ENCODE measurements at regions of chr18 and their contacts with region 1.

Region 1: DNA sequence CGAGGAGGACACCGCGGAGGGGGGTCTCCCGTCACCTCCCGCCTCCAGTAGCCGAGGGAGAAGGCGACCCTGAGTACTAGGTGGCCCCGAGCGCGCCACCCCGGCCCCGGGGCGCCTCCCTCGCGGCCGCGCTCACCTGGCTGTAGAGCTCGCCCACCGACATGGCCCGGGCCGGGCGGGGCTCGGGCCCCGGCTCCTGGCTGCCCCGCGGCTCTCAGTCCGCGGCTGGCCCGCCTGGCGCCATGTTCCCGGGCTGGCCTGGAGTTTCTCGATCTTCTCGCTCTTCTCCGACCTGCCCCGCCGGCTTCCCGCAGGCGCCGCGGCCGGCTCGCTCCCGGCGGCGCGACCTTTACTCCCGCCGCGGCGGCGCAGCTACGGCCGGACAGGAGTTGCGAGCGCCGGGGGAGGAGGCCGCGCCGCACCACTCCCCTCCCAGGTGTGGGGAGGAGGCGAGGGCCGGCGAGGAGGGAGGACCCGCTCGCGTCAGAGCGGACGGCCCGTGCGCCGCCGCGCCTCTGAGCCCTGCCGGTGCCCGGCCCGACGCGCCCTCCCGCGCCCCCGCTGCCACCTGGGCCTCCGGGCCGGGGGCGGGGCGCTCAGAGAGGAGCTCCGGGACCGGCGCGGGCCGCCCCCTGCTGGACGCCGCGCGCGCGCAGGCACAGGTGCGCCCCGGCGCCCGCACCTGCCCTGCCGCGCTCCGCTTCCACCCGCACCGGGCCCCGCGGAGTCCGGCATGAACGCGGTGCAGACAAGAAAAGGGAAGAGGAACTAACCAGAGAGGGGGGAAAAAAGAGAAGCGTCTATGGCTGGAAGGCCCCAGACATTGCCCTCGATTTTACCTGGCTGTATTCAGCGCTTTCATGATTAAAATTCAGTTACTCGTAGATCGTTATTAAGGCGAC is at the start of gene MYO5B:
- DNase-seq: peak; percentile 63
- ATAC-seq: peak; percentile 90
- H3K4me3 ChIP-seq: peak within 1 kb of the TSS; percentile 73 to 90 (median 83)
- H3K27ac ChIP-seq: peak within 1 kb of the TSS; percentile 65
- H3K4me1 ChIP-seq: peaks cover 42% of the 10 kb centered on the region
- H3K27me3 ChIP-seq: peaks cover 0 to 15% of the 10 kb centered on the region in 2 experiments; a peak in 4 of 5 replicates
- CTCF ChIP-seq: peak; percentile 50; the same call in 1 of the 2 replicates
- EP300 ChIP-seq: no peak
- POLR2A ChIP-seq: peak; percentile 41; a peak in 1 of 4 replicates
- RAD21 ChIP-seq: peak; percentile 96
- total RNA-seq, gene MYO5B: 24.0 and 34.9 TPM in 2 replicates

Region 2: DNA sequence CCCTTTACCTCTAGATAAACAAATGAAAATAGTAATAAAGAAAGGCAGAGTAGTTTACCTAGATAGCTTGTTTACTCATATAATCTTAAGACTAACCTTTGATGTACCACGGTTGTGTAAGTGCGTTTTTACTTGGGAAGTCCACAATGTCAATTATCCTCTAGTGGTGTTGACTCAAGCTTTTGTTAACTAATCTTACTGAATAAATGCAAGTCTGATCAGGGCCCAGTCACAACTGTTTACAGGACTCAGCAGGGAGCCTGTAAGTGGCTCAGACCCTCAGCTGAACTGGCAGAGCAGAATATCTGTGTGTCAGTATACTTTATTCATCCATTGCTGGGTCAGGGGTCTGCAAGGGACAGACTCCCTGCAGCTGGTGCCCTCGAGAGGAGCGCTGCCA is 283.5 kb before region 1 on chr18:
- CTCF ChIA-PET with region 1: no interaction called
- POLR2A ChIA-PET with region 1: no interaction called
- in situ Hi-C with region 1: loop called (anchors 10 kb)
- intact Hi-C with region 1: no loop called
- DNase-seq: peak; percentile 69
- ATAC-seq: peak; percentile 61
- H3K4me3 ChIP-seq: no peak overlapping the region
- H3K27ac ChIP-seq: peak overlapping the region; percentile 25
- H3K4me1 ChIP-seq: peaks cover 32% of the 10 kb centered on the region
- H3K27me3 ChIP-seq: no peaks in the 10 kb centered on the region
- CTCF ChIP-seq: no peak
- EP300 ChIP-seq: 0 out of 4 replicates have a peak, but pooled peaks of 1 of the 2 experiments have one; percentile 29
- POLR2A ChIP-seq: no peak
- RAD21 ChIP-seq: no peak

Region 3: DNA sequence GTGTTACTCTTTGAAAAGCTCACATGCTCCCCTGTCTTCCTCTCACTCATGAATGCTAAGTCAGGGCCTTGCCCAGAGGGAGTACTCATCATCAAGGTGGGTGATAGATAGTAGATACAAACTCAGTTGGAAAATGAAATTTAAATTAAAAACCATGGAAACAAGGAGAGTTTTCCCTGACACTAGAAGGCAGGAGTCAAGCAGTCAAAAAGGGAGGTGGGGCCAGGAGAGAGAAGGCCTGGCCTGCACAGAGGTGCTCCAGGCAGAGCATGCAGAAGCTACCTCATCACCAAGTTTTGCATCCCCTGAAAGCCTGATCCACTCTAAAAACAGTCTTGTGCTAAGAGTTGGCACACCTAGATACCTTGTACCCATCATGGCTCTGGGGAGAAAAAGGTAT is 143.6 kb before region 1 on chr18:
- CTCF ChIA-PET with region 1: interaction called, 15 read pairs
- POLR2A ChIA-PET with region 1: no interaction called
- in situ Hi-C with region 1: loop called (anchors 5 kb)
- intact Hi-C with region 1: no loop called
- DNase-seq: peak; percentile 25
- ATAC-seq: peak; percentile 88
- H3K4me3 ChIP-seq: no peak overlapping the region
- H3K27ac ChIP-seq: no peak overlapping the region
- H3K4me1 ChIP-seq: no peaks in the 10 kb centered on the region
- H3K27me3 ChIP-seq: no peaks in the 10 kb centered on the region
- CTCF ChIP-seq: peak; percentile 73
- EP300 ChIP-seq: no peak
- POLR2A ChIP-seq: no peak
- RAD21 ChIP-seq: peak; percentile 62

Region 4: DNA sequence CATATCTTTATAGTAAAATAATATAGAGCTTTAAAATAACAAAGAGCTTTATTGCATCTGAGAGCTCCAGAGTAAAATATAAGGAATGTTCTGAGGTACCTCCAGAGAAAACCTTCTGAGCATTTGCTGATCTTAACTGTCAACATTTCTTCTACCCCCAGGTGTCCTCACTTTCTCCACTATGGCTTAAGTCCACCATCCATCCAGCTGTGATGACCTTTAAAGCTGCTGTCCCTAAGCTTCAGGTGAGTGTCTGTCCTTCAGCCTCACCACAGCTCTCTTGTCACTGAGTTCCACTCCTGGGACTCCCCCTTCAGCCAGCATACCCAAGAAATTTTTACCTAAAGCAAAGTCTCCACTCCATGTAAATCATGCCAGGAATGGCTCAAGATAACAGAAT is 137.9 kb before region 1 on chr18:
- CTCF ChIA-PET with region 1: interaction called, 10 read pairs
- POLR2A ChIA-PET with region 1: no interaction called
- in situ Hi-C with region 1: loop called (anchors 5 kb)
- intact Hi-C with region 1: loop called (anchors 1 kb)
- DNase-seq: peak; percentile 14
- ATAC-seq: peak; percentile 72
- H3K4me3 ChIP-seq: no peak overlapping the region
- H3K27ac ChIP-seq: no peak overlapping the region
- H3K4me1 ChIP-seq: peaks cover 19% of the 10 kb centered on the region
- H3K27me3 ChIP-seq: no peaks in the 10 kb centered on the region
- CTCF ChIP-seq: peak; percentile 50
- EP300 ChIP-seq: no peak
- POLR2A ChIP-seq: no peak
- RAD21 ChIP-seq: no peak

Region 5: DNA sequence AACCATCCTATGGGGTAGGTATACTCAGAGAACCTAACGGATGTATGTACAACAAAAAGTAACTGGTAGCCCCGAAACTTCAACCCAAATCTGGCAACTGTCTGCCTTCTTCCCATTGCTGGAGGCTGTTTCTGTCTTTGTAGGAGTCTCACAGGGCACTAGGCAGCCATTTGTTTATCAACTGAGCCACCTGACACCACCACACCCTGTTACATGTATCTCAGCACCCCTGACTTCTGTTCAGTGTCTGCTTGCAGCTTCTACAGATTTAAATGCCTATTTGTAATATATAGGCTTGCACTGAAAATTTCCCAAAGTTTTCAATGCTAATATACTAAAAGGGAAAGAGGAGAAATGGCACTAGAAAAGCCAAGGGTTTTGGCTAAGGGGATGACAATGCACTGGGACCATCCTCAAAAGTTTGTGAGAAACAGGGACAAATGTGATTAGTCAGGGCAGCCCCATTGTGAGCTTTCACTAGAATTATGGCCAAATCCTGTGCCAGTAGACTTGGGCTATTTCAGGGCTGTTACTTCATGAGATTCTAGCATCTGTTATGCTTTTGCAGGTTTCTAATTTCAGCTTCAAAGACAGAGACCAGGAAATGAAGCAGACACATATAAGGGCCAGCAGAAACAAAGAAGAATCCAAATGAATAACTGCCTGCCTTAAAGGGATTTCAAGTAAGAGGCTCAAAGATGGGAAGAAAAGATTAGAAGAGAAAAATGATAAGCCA is 103.2 kb before region 1 on chr18:
- CTCF ChIA-PET with region 1: no interaction called
- POLR2A ChIA-PET with region 1: no interaction called
- in situ Hi-C with region 1: no loop called
- intact Hi-C with region 1: loop called (anchors 1 kb)
- DNase-seq: no peak
- ATAC-seq: no peak
- H3K4me3 ChIP-seq: no peak overlapping the region; a peak in 2 of 6 replicates
- H3K27ac ChIP-seq: peak overlapping the region; percentile 69
- H3K4me1 ChIP-seq: peaks cover 56% of the 10 kb centered on the region
- H3K27me3 ChIP-seq: no peaks in the 10 kb centered on the region
- CTCF ChIP-seq: no peak
- EP300 ChIP-seq: no peak
- POLR2A ChIP-seq: no peak
- RAD21 ChIP-seq: no peak

Region 6: GRCh38 chr18:50262977-50263376 is 68.1 kb after region 1 on chr18:
- CTCF ChIA-PET with region 1: no interaction called
- POLR2A ChIA-PET with region 1: no interaction called
- in situ Hi-C with region 1: no loop called
- intact Hi-C with region 1: no loop called
- DNase-seq: no peak
- ATAC-seq: no peak
- H3K4me3 ChIP-seq: no peak overlapping the region
- H3K27ac ChIP-seq: no peak overlapping the region
- H3K4me1 ChIP-seq: peaks cover 13% of the 10 kb centered on the region
- H3K27me3 ChIP-seq: no peaks in the 10 kb centered on the region; a peak in 1 of 5 replicates
- CTCF ChIP-seq: no peak
- EP300 ChIP-seq: no peak
- POLR2A ChIP-seq: no peak
- RAD21 ChIP-seq: no peak